ENCODE measurements at regions of chr4 and their contacts with region 1.

Region 1: GRCh38 chr4:147096667-147097604 is 151.3 kb upstream of the TTC29 start:
- DNase-seq: peak; percentile 37
- CTCF ChIP-seq: peak; percentile 41

Region 2: DNA sequence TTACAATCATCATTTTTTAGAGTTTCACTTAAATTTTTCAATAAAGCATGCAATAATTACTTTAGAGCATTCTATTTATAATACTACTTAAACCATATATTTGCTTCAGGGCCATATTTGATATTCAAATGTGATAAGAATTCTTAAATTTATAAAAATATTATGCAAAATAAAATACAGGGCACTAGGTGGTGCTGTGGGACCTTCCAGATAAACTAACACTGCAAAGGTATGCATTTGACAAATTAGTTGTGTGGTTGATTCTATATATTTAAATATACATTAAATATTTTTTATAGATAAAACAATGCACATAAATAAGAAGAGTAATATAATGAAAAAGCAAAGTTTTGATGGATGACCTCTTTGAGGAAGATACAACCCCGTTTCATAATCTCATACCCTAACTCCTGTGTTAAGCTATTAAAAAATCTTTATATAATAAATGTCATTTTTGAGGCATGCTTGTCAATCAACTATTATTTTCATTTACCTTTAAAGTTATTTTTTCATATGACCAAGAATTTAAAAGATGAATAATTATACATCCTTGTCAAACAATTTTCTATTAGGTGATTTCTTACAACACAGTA is 754.2 kb before region 1 on chr4:
- in situ Hi-C with region 1: loop called (anchors 25 kb)
- DNase-seq: no peak
- CTCF ChIP-seq: no peak

Region 3: DNA sequence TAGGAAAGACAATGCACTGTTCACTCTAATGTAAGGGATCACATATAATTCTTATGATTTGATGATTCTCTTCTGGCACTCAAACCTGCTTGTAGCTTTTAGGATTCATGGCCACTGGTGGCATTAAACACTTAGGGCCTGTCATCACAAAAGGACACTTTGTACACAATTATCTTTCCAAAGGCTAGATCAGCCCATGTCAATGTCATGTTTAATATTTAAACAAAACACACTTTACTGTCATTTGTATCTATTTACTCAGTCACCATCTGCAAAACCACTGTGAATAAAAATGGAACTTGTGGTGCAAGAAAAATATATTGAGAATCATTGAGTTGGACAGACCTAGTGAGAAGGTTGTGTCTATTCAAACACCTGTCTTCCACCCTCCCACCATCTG is 67.6 kb before region 1 on chr4:
- in situ Hi-C with region 1: loop called (anchors 10 kb)
- DNase-seq: no peak
- CTCF ChIP-seq: no peak

Region 4: DNA sequence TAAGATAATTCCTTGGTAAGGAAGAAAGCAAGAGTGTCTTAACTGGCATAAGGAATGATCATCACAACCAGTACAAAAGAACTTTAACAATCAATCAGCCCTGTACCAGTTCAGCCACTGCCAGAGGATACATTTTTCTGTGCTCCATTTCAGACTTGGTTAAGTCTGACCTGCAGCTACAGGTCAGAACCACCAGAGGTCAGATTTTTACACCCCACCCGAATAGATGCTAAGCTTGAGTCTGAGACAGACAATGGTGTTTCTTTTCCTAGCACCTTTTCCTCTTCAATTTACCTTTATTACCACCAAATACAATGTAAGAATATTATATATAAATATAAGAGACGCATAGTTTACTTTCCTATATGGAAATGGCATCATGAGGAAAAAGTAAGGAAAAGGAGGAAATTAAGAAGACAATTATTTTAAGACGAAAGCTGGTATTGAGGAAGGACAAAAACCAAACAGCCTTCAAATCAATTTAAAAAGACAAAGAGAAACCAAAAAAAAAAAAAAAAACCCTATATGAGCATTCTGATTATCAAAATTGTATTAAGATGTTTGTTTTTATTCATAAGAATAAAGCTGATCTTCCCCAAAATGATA is 64.1 kb after region 1 on chr4:
- in situ Hi-C with region 1: no loop called
- DNase-seq: peak; percentile 70
- CTCF ChIP-seq: peak; percentile 70

Region 5: GRCh38 chr4:147351083-147351787 is 254.3 kb after region 1 on chr4:
- in situ Hi-C with region 1: no loop called
- DNase-seq: no peak
- CTCF ChIP-seq: no peak

Region 6: DNA sequence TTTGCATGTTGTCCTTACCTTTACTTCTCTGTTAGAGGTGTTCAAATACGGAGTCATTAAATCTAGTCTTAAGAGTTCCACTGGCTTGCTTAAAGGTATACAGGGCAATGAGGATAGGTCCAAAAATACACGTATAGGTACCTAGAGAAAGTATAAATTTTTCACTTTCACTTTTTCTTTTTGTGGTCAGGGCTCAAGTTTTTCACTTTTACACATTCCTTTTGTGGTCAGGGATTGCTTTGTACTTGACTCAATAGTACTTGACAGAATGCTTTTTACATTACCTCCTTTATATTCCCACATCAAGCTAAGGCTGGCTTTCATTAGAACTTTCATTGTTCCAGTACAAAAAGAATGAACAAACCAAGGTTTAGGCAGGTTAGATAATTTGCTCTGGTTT is 542.0 kb after region 1 on chr4:
- in situ Hi-C with region 1: no loop called
- DNase-seq: no peak
- CTCF ChIP-seq: no peak

Region 7: DNA sequence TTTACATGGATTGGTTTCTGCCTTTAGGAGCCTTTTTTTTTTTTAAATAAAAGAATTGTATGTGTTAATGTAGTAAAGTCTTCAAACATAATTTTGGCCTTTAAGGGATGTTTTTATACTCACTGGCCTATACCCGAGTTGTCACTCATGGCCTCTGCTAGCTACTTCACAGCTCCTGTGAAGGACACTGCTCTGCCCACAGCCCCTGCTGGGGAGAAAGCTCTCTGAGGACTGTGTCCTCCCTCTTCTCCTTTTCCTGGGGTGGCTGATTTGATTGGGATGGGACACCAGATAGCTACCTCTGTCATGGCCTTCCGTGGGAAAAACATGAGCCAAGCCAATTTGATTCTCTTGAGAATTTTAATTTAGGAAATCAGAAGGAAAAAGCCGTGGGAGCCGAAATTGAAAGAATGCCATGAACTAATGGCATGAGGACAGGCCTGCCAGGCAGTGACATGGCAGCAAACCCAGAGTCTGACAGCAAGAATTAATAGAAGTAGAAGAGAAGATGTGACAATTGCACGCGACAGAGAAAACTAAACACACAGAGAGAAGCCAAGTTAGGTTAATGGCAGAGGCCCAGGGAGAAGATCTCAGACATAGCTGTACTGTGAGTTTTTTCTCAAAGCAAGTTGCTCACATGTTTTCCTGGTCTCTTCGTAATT is 716.3 kb after region 1 on chr4:
- in situ Hi-C with region 1: no loop called
- DNase-seq: no peak
- CTCF ChIP-seq: no peak